ENCODE measurements at regions of chr3 and their contacts with region 1.

Region 1: GRCh38 chr3:168040607-168041208 is 55.0 kb downstream of the GOLIM4 start:
- DNase-seq: peak; percentile 55 to 81 (median 80)
- H3K4me3 ChIP-seq: no peak overlapping the region
- H3K27ac ChIP-seq: no peak overlapping the region
- H3K4me1 ChIP-seq: no peaks in the 10 kb centered on the region
- H3K27me3 ChIP-seq: no peaks in the 10 kb centered on the region

Region 2: DNA sequence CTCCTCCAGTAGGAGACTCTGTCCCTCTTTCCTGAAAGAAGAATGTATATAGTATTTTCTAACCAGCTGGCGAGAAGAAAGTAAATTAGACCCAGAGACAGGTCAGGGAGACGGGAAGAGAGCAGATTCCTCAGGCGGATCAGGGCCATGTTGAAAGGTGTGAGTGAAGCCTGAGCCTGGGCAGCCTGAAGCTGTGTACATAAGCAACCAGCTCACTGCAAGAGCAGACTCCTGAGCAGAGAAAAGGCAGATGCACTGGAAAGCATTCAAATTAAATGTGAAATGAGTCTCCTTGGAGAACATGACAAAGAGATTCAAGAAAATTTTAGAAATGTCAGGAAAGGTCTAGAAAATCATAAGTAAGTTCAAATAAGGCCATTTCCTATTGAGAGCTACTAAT is 110.7 kb before region 1 on chr3:
- CTCF ChIA-PET with region 1: interaction called, 99 read pairs
- POLR2A ChIA-PET with region 1: interaction called, 5 read pairs
- DNase-seq: no peak
- H3K4me3 ChIP-seq: no peak overlapping the region
- H3K27ac ChIP-seq: no peak overlapping the region
- H3K4me1 ChIP-seq: no peaks in the 10 kb centered on the region
- H3K27me3 ChIP-seq: no peaks in the 10 kb centered on the region

Region 3: GRCh38 chr3:167941234-167941995 is 99.3 kb before region 1 on chr3:
- CTCF ChIA-PET with region 1: interaction called, 10 read pairs
- POLR2A ChIA-PET with region 1: no interaction called
- DNase-seq: peak; percentile 81 to 95 (median 91)
- H3K4me3 ChIP-seq: peak overlapping the region in 5 of 7 experiments; percentile 3 to 60 (median 31)
- H3K27ac ChIP-seq: no peak overlapping the region
- H3K4me1 ChIP-seq: peaks cover 14 to 32% (median 24%) of the 10 kb centered on the region in 4 experiments
- H3K27me3 ChIP-seq: no peaks in the 10 kb centered on the region

Region 4: GRCh38 chr3:168025076-168025475 is 15.6 kb before region 1 on chr3:
- CTCF ChIA-PET with region 1: interaction called, 12 read pairs
- POLR2A ChIA-PET with region 1: no interaction called
- DNase-seq: peak in 1 of 3 donors; percentile 5
- H3K4me3 ChIP-seq: peak overlapping the region in 1 of 7 experiments; percentile 5
- H3K27ac ChIP-seq: no peak overlapping the region
- H3K4me1 ChIP-seq: peaks cover 0 to 15% (median 6%) of the 10 kb centered on the region in 4 experiments
- H3K27me3 ChIP-seq: no peaks in the 10 kb centered on the region

Measured in common myeloid progenitor, CD34-positive (primary cell).